K562 (cell line): ENCODE measurements at regions of chr16 and their contacts with region 1.

Region 1: DNA sequence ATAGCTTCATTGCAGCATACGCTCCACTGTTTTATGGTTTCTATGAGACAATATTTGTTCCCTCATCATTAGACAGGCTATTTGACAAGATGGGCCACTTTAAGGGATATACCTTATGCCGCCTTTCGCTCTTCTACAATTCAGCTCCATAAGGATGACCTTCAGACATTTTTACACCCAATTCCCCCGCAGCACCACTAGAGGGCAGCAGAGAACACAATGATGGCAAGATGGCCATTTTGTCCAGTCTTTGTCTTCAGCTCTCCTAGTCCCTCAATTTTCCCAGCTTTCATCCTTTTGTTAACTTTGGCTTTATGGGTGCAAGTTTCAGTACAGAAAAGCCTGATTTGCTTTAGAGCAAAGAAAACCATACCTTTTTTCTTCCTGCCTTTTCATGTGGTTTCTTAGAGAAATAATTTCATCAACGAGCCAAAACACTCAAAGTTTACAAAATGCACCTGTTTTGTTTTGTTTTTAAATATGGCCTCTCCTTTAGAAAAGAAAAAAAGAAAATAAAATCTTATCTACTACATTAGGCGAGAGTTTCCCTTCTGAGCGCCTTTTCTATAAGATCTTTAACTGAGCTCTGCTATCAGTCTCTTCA is 355.3 kb downstream of the TOX3 start:
- DNase-seq: peak; percentile 59 to 74 (median 69)
- ATAC-seq: peak; percentile 54; the same call in 2 of the 3 replicates
- H3K4me3 ChIP-seq: no peak overlapping the region
- H3K27ac ChIP-seq: no peak overlapping the region
- H3K4me1 ChIP-seq: no peaks in the 10 kb centered on the region
- H3K27me3 ChIP-seq: no peaks in the 10 kb centered on the region
- CTCF ChIP-seq: peak; percentile 60 to 79 (median 76)
- EP300 ChIP-seq: no peak
- POLR2A ChIP-seq: no peak
- RAD21 ChIP-seq: peak; percentile 65 to 75

Region 2: DNA sequence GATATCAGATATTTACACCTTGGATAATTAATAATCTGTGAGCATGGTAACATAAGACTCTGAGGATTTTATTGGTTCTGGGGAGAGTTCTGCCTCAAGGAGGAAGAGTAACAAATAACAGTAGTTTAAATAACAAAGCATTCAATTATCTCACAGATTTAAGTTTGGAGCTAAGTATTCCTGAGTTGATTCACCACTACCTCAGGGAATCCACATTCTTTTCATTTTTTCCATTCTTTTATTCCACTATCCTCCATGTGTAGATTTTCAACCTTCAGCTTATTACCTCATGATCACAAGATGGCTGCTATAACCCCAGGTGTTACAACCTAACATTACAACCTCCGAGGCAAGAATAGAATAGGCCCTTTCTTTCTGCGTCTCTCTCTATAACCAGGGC is 607.5 kb after region 1 on chr16:
- CTCF ChIA-PET with region 1: no interaction called
- POLR2A ChIA-PET with region 1: no interaction called
- in situ Hi-C with region 1: no loop called
- intact Hi-C with region 1: no loop called
- DNase-seq: no peak
- ATAC-seq: no peak
- H3K4me3 ChIP-seq: no peak overlapping the region
- H3K27ac ChIP-seq: no peak overlapping the region
- H3K4me1 ChIP-seq: no peaks in the 10 kb centered on the region
- H3K27me3 ChIP-seq: no peaks in the 10 kb centered on the region
- CTCF ChIP-seq: no peak
- EP300 ChIP-seq: no peak
- POLR2A ChIP-seq: no peak
- RAD21 ChIP-seq: no peak

Region 3: GRCh38 chr16:52912565-52913173 is 721.0 kb after region 1 on chr16:
- CTCF ChIA-PET with region 1: no interaction called
- POLR2A ChIA-PET with region 1: no interaction called
- in situ Hi-C with region 1: no loop called
- intact Hi-C with region 1: loop called (anchors 1 kb)
- DNase-seq: peak; percentile 46 to 64 (median 52)
- ATAC-seq: peak; percentile 93
- H3K4me3 ChIP-seq: no peak overlapping the region
- H3K27ac ChIP-seq: no peak overlapping the region
- H3K4me1 ChIP-seq: no peaks in the 10 kb centered on the region
- H3K27me3 ChIP-seq: no peaks in the 10 kb centered on the region
- CTCF ChIP-seq: peak; percentile 60 to 76 (median 70)
- EP300 ChIP-seq: no peak
- POLR2A ChIP-seq: no peak
- RAD21 ChIP-seq: peak; percentile 50 to 80

Region 4: GRCh38 chr16:53503270-53503923 is 1311.8 kb after region 1 on chr16:
- CTCF ChIA-PET with region 1: no interaction called
- POLR2A ChIA-PET with region 1: no interaction called
- in situ Hi-C with region 1: loop called (anchors 25 kb)
- intact Hi-C with region 1: no loop called
- DNase-seq: peak; percentile 98 to 100 (median 99)
- ATAC-seq: peak; percentile 96
- H3K4me3 ChIP-seq: peak overlapping the region; percentile 72
- H3K27ac ChIP-seq: peak overlapping the region; percentile 60
- H3K4me1 ChIP-seq: peaks cover 7 to 16% of the 10 kb centered on the region in 2 experiments; a peak in 4 of 5 replicates
- H3K27me3 ChIP-seq: no peaks in the 10 kb centered on the region; a peak in 1 of 5 replicates
- CTCF ChIP-seq: 0 out of 6 replicates have a peak, but pooled peaks of 1 of the 3 experiments have one; percentile 3
- EP300 ChIP-seq: no peak
- POLR2A ChIP-seq: peak; percentile 83
- RAD21 ChIP-seq: no peak